ENCODE measurements at regions of chr20 and their contacts with region 1.

Region 1: DNA sequence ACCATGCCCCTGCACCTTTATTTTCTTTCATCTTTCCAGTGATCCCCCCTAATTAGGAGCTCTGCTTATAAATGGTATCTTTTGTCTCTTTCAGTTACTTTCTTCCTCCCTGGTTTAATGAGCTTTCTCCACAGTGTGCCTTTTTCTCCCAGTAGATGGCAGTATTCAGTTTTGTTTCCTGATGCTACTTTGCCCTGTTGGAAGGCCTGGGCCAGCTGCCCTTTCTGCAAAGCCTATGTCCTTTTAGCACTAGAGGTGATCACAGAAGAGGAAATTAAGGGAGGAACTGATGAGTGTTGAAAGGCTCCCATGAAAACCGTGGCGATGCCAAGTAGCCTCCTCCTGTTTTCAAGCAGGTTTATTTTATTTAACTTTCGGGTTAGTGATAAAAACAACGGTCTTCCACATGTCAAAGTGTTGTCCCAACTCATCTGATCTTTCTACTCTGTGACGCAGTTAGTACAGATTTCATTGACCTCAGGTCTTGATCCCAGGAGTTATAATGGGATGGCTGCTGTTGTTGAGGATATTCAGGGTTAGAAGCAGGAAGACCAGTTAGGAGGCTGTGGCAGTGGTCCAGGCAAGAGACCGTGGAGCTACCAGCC is 184.2 kb upstream of the BMP2 start:
- DNase-seq: peak; percentile 78
- H3K4me3 Mint-ChIP-seq: no peak overlapping the region
- H3K27ac Mint-ChIP-seq: no peak overlapping the region
- H3K4me1 Mint-ChIP-seq: peaks cover 23% of the 10 kb centered on the region
- H3K27me3 Mint-ChIP-seq: no peaks in the 10 kb centered on the region
- CTCF ChIP-seq: peak; percentile 66

Region 2: GRCh38 chr20:6178537-6178936 is 404.7 kb before region 1 on chr20:
- CTCF ChIA-PET with region 1: interaction called, 3 read pairs
- POLR2A ChIA-PET with region 1: no interaction called
- intact Hi-C with region 1: loop called (anchors 2 kb)
- DNase-seq: peak; percentile 50
- H3K4me3 Mint-ChIP-seq: no peak overlapping the region
- H3K27ac Mint-ChIP-seq: no peak overlapping the region
- H3K4me1 Mint-ChIP-seq: no peaks in the 10 kb centered on the region
- H3K27me3 Mint-ChIP-seq: no peaks in the 10 kb centered on the region
- CTCF ChIP-seq: peak; percentile 45

Region 3: GRCh38 chr20:6566821-6567220 is 16.4 kb before region 1 on chr20:
- CTCF ChIA-PET with region 1: interaction called, 12 read pairs
- POLR2A ChIA-PET with region 1: interaction called, 6 read pairs
- intact Hi-C with region 1: no loop called
- DNase-seq: peak; percentile 94
- H3K4me3 Mint-ChIP-seq: no peak overlapping the region
- H3K27ac Mint-ChIP-seq: no peak overlapping the region
- H3K4me1 Mint-ChIP-seq: peaks cover 18% of the 10 kb centered on the region
- H3K27me3 Mint-ChIP-seq: no peaks in the 10 kb centered on the region
- CTCF ChIP-seq: no peak

Region 4: GRCh38 chr20:6623989-6624388 is 40.8 kb after region 1 on chr20:
- CTCF ChIA-PET with region 1: interaction called, 32 read pairs
- POLR2A ChIA-PET with region 1: interaction called, 3 read pairs
- intact Hi-C with region 1: no loop called
- DNase-seq: no peak
- H3K4me3 Mint-ChIP-seq: no peak overlapping the region
- H3K27ac Mint-ChIP-seq: no peak overlapping the region
- H3K4me1 Mint-ChIP-seq: no peaks in the 10 kb centered on the region
- H3K27me3 Mint-ChIP-seq: no peaks in the 10 kb centered on the region
- CTCF ChIP-seq: no peak

Region 5: GRCh38 chr20:6756693-6757595 is 173.7 kb after region 1 on chr20:
- CTCF ChIA-PET with region 1: interaction called, 10 read pairs
- POLR2A ChIA-PET with region 1: no interaction called
- intact Hi-C with region 1: no loop called
- DNase-seq: no peak
- H3K4me3 Mint-ChIP-seq: no peak overlapping the region
- H3K27ac Mint-ChIP-seq: no peak overlapping the region
- H3K4me1 Mint-ChIP-seq: peaks cover 4% of the 10 kb centered on the region
- H3K27me3 Mint-ChIP-seq: no peaks in the 10 kb centered on the region
- CTCF ChIP-seq: no peak

Region 6: GRCh38 chr20:7094438-7094997 is 511.3 kb after region 1 on chr20:
- CTCF ChIA-PET with region 1: no interaction called
- POLR2A ChIA-PET with region 1: no interaction called
- intact Hi-C with region 1: loop called (anchors 10 kb)
- DNase-seq: peak; percentile 65
- H3K4me3 Mint-ChIP-seq: no peak overlapping the region
- H3K27ac Mint-ChIP-seq: no peak overlapping the region
- H3K4me1 Mint-ChIP-seq: no peaks in the 10 kb centered on the region
- H3K27me3 Mint-ChIP-seq: no peaks in the 10 kb centered on the region
- CTCF ChIP-seq: peak; percentile 63